Caco-2 (cell line): ENCODE measurements at regions of chr12 and their contacts with region 1.

Region 1: GRCh38 chr12:38771871-38772270 is 133.5 kb downstream of the CPNE8 start:
- DNase-seq: no peak
- H3K4me3 ChIP-seq: no peak overlapping the region
- H3K4me3 Mint-ChIP-seq: no peak overlapping the region
- H3K27ac Mint-ChIP-seq: no peak overlapping the region
- H3K4me1 ChIP-seq: no peaks in the 10 kb centered on the region
- H3K4me1 Mint-ChIP-seq: no peaks in the 10 kb centered on the region
- H3K27me3 ChIP-seq: no peaks in the 10 kb centered on the region
- H3K27me3 Mint-ChIP-seq: no peaks in the 10 kb centered on the region
- CTCF ChIP-seq: no peak

Region 2: DNA sequence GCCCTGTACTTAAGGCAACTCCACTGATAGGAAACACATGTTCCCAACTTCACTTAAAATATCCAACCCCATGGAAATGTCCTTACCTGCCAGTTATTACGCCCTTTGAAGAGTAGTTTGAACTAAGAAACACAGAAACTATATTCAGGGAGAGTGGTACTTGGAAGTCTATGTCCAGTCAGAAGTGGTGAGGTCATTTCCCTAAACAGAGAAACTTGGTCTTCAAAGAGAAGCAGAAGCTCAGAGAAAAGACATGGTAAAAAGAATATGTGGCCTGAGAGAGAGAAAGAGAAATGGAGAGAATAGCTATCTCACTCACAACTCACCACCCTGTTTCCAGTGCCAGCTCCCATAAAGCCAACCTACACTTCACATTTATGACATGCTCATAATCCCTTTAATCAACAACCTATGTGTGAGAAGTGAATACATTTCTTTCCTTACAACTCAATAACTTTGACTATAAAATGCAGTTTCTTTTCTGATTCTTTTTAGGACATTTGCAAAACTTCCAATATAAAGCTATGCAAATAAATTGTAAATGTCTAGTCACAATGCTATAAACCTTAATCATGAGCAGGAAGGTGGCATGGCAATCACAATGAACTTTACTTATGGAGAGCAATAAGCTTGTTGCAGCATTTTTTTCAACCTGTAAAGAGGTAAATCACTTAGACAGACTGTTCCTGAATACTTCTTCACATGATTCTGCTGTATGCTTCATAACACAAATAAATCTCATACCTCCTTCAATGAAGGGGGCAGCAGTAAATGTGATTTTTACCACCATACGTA is 66.4 kb after region 1 on chr12:
- CTCF ChIA-PET with region 1: no interaction called
- POLR2A ChIA-PET with region 1: no interaction called
- intact Hi-C with region 1: loop called (anchors 10 kb)
- DNase-seq: no peak
- H3K4me3 ChIP-seq: no peak overlapping the region
- H3K4me3 Mint-ChIP-seq: no peak overlapping the region
- H3K27ac Mint-ChIP-seq: no peak overlapping the region
- H3K4me1 ChIP-seq: no peaks in the 10 kb centered on the region
- H3K4me1 Mint-ChIP-seq: no peaks in the 10 kb centered on the region
- H3K27me3 ChIP-seq: no peaks in the 10 kb centered on the region
- H3K27me3 Mint-ChIP-seq: no peaks in the 10 kb centered on the region
- CTCF ChIP-seq: no peak